Psoas muscle (tissue), 8 donors: ENCODE measurements at regions of chr17 and their contacts with region 1.

Region 1: DNA sequence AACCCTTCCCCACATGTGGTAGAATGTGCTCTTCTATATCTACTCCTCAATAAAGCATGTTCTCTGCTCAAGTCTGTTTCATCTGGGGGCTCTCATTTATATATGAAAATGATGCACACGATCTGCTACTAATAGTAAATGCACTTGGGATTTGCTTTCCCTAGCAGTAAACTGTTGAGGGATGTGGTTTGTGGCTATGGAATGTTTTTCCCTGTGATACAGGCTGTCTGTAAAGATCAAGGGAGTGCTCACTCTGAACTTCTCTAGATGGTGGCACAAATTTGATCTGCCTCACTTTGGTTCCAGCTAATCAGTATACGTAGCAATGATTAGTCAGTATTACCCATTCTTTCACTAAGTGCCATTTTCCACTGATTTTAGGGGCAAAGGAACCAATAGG is 18.8 kb downstream of the TAC4 start:
- DNase-seq: no peak
- ATAC-seq: peak in 1 of 4 donors; percentile 5
- H3K4me3 ChIP-seq: no peak overlapping the region
- H3K27ac ChIP-seq: peak overlapping the region; percentile 66
- H3K4me1 ChIP-seq: peaks cover 23% of the 10 kb centered on the region
- H3K27me3 ChIP-seq: no peaks in the 10 kb centered on the region
- CTCF ChIP-seq: no peak

Region 2: DNA sequence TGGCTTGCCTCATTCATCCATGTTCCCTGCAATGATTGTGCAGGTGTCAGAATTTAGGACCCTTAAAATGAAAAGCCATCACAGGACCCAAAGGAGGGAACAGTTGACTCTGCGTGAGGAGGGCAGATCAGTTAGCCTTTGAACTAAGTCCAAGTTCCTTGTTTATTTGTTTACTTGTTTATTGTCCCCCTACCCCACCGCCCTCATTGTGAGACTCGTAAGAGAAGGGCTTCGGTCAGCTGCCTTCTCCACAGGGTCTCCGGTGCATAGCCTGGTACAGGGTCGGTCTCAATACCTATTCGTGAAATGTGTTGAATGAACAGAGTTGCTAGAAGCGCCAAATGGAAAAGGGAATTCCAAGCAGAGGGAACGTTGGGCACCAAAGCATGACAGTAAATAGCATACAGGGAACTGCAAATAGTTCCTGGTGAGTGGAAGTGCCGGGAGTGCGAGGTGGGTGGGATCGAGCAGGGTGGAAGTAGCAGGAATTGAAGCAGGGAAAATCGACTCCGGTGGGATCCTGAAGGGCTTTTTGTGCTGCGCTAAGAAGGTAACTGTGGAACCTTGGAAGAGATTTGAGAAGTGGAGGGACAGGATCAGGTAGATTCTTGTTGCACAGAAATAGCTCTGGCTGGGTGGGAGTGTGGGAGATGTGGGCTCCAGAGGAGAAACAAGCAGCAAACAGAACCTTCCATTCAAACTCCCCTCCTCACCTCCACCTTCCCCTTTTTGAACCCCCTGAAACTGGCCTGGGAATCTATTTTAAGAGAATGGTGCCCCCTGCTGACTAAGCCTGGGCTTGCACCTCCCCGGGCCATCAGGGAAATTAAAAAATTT is 134.0 kb before region 1 on chr17:
- intact Hi-C with region 1: no loop called
- DNase-seq: peak; percentile 48 to 64
- ATAC-seq: peak; percentile 42 to 48 (median 45)
- H3K4me3 ChIP-seq: no peak overlapping the region
- H3K27ac ChIP-seq: no peak overlapping the region
- H3K4me1 ChIP-seq: peaks cover 8% of the 10 kb centered on the region
- H3K27me3 ChIP-seq: no peaks in the 10 kb centered on the region
- CTCF ChIP-seq: peak; percentile 89

Region 3: DNA sequence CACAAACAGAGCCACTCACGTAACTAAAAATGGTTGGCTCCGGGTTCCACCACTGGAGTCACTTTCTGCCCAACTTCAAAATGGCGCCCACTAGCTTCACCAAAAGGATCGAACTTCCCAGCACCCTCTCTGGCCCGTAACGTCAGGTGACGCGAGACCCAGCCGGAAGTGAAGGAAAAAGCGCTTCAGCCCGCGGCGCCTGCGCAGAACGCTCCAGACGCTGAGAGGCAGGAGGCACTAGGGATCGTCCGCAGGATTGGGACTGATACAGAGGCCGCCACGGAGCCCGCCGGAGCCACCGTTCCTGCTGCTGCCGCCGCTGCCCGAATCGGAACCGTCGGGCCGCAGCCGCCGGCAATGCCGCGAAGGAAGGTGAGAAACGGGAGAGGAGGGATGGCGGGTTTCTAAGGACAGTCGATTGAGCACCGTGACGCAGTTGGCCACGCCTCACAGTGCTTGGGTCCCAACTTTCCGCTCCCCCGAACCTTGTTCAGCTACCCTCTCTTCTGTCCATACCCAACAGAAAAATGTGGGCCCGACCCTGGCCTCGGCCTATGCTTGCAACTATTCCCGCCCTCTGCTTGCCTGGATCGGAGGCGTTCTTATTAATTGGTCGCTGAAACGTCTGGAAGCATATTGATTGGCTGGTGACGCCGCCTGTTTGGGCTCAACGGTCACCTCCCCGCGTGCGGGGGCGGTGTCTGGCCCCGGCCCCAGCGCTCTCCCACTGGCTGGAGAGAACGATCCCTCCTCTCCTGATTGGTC is 40.4 kb before region 1 on chr17 and contains the start of gene KAT7:
- intact Hi-C with region 1: loop called in 1 of 2 experiments (anchors 5 kb)
- DNase-seq: peak; percentile 99 to 100
- ATAC-seq: peak; percentile 94 to 96 (median 95)
- H3K4me3 ChIP-seq: peak within 1 kb of the TSS; percentile 100
- H3K27ac ChIP-seq: peak within 1 kb of the TSS; percentile 100
- H3K4me1 ChIP-seq: peaks cover 47% of the 10 kb centered on the region
- H3K27me3 ChIP-seq: no peaks in the 10 kb centered on the region
- CTCF ChIP-seq: no peak
- total RNA-seq, gene KAT7: 27.6 to 60.7 (median 54.7) TPM

Region 4: GRCh38 chr17:49873466-49873865 is 44.4 kb after region 1 on chr17:
- intact Hi-C with region 1: no loop called
- DNase-seq: no peak
- ATAC-seq: no peak
- H3K4me3 ChIP-seq: no peak overlapping the region
- H3K27ac ChIP-seq: no peak overlapping the region
- H3K4me1 ChIP-seq: no peaks in the 10 kb centered on the region
- H3K27me3 ChIP-seq: no peaks in the 10 kb centered on the region
- CTCF ChIP-seq: no peak

Region 5: DNA sequence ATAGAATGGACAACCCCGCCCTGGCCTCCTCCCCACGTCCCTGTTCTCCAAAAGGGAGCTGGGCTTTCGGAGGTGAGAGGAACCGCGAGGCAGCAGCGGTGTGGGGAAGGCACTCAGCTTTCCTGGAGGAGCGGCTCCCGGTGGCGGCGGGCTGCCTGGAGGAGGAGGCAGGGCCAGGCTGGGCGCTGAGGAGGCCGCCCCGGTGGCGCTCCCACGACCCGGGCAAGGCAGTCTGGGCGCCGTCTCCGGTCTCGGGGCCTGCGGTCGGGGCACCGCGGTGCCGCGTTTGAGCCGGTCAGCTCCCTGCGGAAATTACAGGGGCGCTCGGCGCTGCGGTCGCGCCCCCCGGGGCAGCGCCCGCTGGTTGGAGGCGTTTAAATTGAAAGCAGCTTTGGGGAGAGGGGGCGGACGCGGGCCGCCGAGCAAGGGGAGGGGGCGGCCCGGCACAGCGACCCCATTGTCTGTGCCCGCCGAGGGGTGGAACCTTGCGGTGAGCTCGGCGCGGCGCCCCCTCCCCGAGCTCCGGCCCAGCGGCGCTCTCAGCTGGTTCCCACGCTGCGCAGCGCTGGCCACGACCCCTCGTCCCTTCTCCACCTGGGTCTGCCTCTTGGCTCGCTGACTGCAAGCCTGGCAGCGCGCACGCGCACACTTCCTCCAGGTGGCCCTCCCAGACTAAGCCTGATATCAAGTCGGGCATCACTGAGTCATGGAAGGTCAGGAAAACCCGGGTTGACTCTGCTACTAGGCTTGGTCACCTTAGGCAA is 81.2 kb after region 1 on chr17:
- intact Hi-C with region 1: no loop called
- DNase-seq: no peak
- ATAC-seq: no peak
- H3K4me3 ChIP-seq: no peak overlapping the region
- H3K27ac ChIP-seq: no peak overlapping the region
- H3K4me1 ChIP-seq: no peaks in the 10 kb centered on the region
- H3K27me3 ChIP-seq: peaks cover 0 to 56% (median 41%) of the 10 kb centered on the region in 3 donors
- CTCF ChIP-seq: no peak